ENCODE measurements at regions of chr17 and their contacts with region 1.

Region 1: DNA sequence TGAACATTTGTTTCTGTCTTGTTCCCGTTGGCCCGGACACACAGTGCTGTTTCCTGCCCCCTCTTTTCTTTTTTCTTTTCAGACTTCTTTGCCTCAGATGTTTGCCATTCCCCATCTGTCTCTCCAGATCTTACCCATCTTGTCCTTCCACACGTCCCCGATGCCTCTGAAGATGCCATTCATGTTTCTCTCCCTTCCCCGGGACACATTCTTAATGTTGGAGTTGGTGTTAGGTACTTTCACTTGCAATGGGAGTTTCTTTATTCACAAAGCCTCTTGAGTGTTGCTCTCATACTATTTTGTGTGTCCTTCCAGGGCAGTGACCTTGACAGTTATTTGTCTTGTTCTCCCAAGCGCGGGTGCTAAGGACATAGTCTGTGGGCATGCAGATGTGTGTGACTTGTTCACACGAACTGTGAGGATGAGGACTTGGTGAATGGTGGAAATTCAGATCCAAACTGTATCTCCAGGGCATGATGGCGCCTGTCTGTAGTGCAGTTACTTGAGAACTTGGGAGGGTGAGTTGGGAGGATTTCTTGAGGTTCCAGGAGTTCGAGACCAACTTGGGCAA is 8.3 kb downstream of the SEC14L1 start:
- DNase-seq: no peak
- H3K4me3 ChIP-seq: no peak overlapping the region
- H3K27ac ChIP-seq: no peak overlapping the region
- H3K4me1 ChIP-seq: peaks cover 6% of the 10 kb centered on the region
- H3K27me3 ChIP-seq: no peaks in the 10 kb centered on the region
- CTCF ChIP-seq: no peak

Region 2: DNA sequence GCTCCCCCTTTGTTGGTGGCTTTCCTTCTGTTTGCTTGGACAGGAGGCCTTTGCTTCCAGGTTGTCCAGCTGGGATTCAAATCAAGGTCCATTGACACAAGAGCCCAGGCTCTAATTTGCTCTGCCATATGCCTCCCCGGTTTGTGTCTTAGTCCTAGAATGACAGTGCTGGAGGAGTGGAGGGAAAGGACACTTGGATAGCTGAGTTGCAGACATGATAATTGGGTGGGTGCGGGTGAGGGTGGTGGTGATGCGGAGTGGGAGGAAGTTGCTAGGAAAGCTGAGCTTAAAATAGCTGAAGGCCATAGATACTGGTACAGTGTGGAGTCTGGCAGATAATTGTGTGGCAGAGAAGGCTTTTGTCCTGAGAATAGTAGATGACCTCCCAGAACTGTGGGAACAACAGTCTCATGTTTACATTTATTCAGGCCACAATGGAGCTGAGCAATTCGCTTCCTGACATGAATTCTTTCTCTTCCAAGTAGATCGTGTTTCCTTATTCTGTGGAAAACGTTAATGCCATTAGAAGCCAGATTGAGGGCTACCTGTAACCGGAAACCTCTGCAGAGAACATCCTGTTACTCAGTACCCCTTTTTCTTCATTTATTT is 15.6 kb after region 1 on chr17:
- CTCF ChIA-PET with region 1: no interaction called
- POLR2A ChIA-PET with region 1: interaction called, 17 read pairs
- intact Hi-C with region 1: no loop called
- DNase-seq: no peak
- H3K4me3 ChIP-seq: no peak overlapping the region
- H3K27ac ChIP-seq: no peak overlapping the region
- H3K4me1 ChIP-seq: peaks cover 25% of the 10 kb centered on the region
- H3K27me3 ChIP-seq: no peaks in the 10 kb centered on the region
- CTCF ChIP-seq: no peak